Posterior vena cava (tissue), 2 donors: ENCODE measurements at regions of chr1 and their contacts with region 1.

Region 1: GRCh38 chr1:211476200-211476849 is 15.6 kb downstream of the RD3 start:
- DNase-seq: peak; percentile 89

Region 2: GRCh38 chr1:211323156-211324063 is 152.9 kb before region 1 on chr1:
- intact Hi-C with region 1: loop called in 1 of 2 experiments (anchors 10 kb)
- DNase-seq: peak; percentile 80

Region 3: DNA sequence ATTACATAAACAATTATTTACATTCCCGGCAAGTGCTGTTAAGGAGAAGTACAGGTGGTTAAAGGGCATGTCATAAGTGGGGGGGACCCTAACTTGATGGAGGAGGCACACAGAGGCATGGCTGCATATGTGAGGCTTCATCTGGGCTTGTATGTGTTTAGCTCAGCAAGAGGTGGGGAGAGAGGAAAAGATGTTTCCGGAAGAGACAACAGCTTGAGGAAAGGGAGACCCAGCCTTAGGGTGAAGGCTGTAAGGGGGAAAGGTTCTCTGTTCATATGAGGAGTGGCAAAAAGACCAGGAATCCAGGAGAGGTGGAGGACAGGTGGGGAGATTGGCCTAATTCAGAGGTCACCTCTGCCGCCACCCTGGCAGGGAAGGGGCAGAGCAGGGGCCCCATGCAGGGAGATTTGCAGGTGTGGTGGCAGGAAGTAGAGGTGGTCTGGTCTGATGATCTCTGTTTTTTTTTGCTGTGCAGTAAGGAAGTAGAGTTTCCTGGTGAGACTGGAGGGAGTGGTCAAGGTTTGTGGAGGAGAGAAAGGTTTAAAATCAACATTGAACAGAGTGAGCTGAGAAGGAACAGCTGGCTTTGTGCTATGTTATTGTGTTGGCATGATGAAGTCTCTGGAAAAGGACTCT is 140.7 kb before region 1 on chr1:
- intact Hi-C with region 1: loop called in 1 of 2 experiments (anchors 10 kb)
- DNase-seq: no peak